H1 (cell line): ENCODE measurements at regions of chr15 and their contacts with region 1.

Region 1: GRCh38 chr15:65028921-65029735 is at the start of gene MTFMT:
- DNase-seq: peak in 1 of 2 experiments; percentile 98
- H3K4me3 ChIP-seq: peak within 1 kb of the TSS; percentile 75 to 93 (median 88)
- H3K27ac ChIP-seq: no peak within 1 kb of the TSS; the same call in 1 of the 2 replicates
- H3K4me1 ChIP-seq: peaks cover 0 to 2% (median 0%) of the 10 kb centered on the region in 4 experiments; a peak in 1 of 7 replicates
- H3K27me3 ChIP-seq: no peaks in the 10 kb centered on the region
- CTCF ChIP-seq: no peak; a peak in 1 of 4 replicates
- EP300 ChIP-seq: no peak
- POLR2A ChIP-seq: peak; percentile 89 to 90
- RAD21 ChIP-seq: no peak; a peak in 1 of 4 replicates
- total RNA-seq, gene MTFMT: 16.5 and 20.8 TPM in 2 replicates

Region 2: GRCh38 chr15:64895285-64896065 is 133.7 kb before region 1 on chr15:
- CTCF ChIA-PET with region 1: no interaction called
- POLR2A ChIA-PET with region 1: no interaction called
- DNase-seq: no peak
- H3K4me3 ChIP-seq: peak overlapping the region in 1 of 4 experiments; percentile 62; a peak in 2 of 8 replicates
- H3K27ac ChIP-seq: no peak overlapping the region
- H3K4me1 ChIP-seq: peaks cover 7 to 26% (median 14%) of the 10 kb centered on the region in 4 experiments; a peak in 6 of 7 replicates
- H3K27me3 ChIP-seq: no peaks in the 10 kb centered on the region
- CTCF ChIP-seq: no peak
- EP300 ChIP-seq: no peak
- POLR2A ChIP-seq: no peak
- RAD21 ChIP-seq: no peak

Region 3: GRCh38 chr15:64930778-64931371 is 98.3 kb before region 1 on chr15:
- CTCF ChIA-PET with region 1: no interaction called
- POLR2A ChIA-PET with region 1: no interaction called
- DNase-seq: peak in 1 of 2 experiments; percentile 39
- H3K4me3 ChIP-seq: no peak overlapping the region
- H3K27ac ChIP-seq: no peak overlapping the region
- H3K4me1 ChIP-seq: no peaks in the 10 kb centered on the region
- H3K27me3 ChIP-seq: no peaks in the 10 kb centered on the region
- CTCF ChIP-seq: no peak
- EP300 ChIP-seq: no peak
- POLR2A ChIP-seq: no peak
- RAD21 ChIP-seq: no peak

Region 4: GRCh38 chr15:65049418-65049840 is 20.3 kb after region 1 on chr15:
- CTCF ChIA-PET with region 1: interaction called, 57 read pairs
- POLR2A ChIA-PET with region 1: no interaction called
- DNase-seq: peak; percentile 61 to 88
- H3K4me3 ChIP-seq: peak overlapping the region in 2 of 4 experiments; percentile 15 to 44; a peak in 4 of 8 replicates
- H3K27ac ChIP-seq: no peak overlapping the region
- H3K4me1 ChIP-seq: no peaks in the 10 kb centered on the region; a peak in 1 of 7 replicates
- H3K27me3 ChIP-seq: no peaks in the 10 kb centered on the region; a peak in 2 of 7 replicates
- CTCF ChIP-seq: no peak
- EP300 ChIP-seq: no peak
- POLR2A ChIP-seq: no peak
- RAD21 ChIP-seq: no peak

Region 5: DNA sequence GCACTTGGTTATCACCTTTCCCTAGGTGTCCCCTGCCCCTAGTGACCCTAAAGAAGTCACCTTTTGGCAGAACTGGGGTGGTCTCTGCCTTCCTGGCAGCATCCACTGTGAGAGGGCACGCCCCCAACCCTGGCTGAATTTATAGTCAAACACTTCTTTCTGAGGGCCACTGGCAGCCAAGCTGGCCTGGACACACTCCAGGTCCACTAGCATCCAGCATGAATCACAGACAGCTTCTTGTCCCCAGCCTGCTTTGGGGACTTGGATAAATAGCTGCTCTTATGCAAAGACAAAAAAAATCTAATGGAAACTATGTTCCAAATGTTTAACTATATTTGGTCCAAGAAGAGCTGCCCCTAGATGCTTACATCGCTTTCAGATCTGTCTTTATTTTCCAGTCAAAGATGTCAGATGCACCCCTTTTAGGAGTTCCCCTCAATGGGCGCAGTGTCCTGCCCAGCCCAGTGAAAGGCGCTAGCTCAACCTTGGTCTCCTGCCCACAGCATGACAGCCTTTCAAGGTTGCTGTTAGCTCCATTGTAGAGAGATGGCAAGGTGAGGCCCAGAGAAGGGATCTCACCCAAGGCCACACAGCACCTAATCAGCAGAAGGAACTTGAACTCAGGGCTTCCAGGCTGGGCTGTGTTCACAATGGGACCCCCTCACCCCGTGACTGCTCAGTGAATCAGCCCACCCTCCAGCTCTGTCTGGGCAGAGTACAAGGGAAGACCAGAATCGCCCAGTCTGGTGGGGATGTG is 31.7 kb after region 1 on chr15:
- CTCF ChIA-PET with region 1: interaction called, 57 read pairs
- POLR2A ChIA-PET with region 1: no interaction called
- DNase-seq: no peak
- H3K4me3 ChIP-seq: no peak overlapping the region
- H3K27ac ChIP-seq: no peak overlapping the region
- H3K4me1 ChIP-seq: no peaks in the 10 kb centered on the region
- H3K27me3 ChIP-seq: no peaks in the 10 kb centered on the region; a peak in 1 of 7 replicates
- CTCF ChIP-seq: peak; percentile 8 to 34 (median 20); a peak in 2 of 4 replicates
- EP300 ChIP-seq: no peak
- POLR2A ChIP-seq: no peak
- RAD21 ChIP-seq: peak in 1 of 2 experiments; percentile 8; a peak in 1 of 4 replicates

Region 6: GRCh38 chr15:65077981-65078352 is 48.8 kb after region 1 on chr15:
- CTCF ChIA-PET with region 1: interaction called, 43 read pairs
- POLR2A ChIA-PET with region 1: no interaction called
- DNase-seq: peak; percentile 84 to 85
- H3K4me3 ChIP-seq: no peak overlapping the region
- H3K27ac ChIP-seq: no peak overlapping the region
- H3K4me1 ChIP-seq: peaks cover 3 to 13% (median 7%) of the 10 kb centered on the region in 4 experiments; a peak in 5 of 7 replicates
- H3K27me3 ChIP-seq: peaks cover 0 to 9% (median 8%) of the 10 kb centered on the region in 4 experiments; a peak in 5 of 7 replicates
- CTCF ChIP-seq: peak; percentile 77 to 95 (median 86)
- EP300 ChIP-seq: no peak
- POLR2A ChIP-seq: no peak
- RAD21 ChIP-seq: peak; percentile 69 to 74

Region 7: GRCh38 chr15:65094294-65094995 is 65.3 kb after region 1 on chr15:
- CTCF ChIA-PET with region 1: interaction called, 12 read pairs
- POLR2A ChIA-PET with region 1: interaction called, 3 read pairs
- DNase-seq: no peak
- H3K4me3 ChIP-seq: no peak overlapping the region
- H3K27ac ChIP-seq: no peak overlapping the region; the same call in 1 of the 2 replicates
- H3K4me1 ChIP-seq: peaks cover 0 to 3% (median under 1%) of the 10 kb centered on the region in 4 experiments; a peak in 2 of 7 replicates
- H3K27me3 ChIP-seq: no peaks in the 10 kb centered on the region
- CTCF ChIP-seq: no peak
- EP300 ChIP-seq: no peak
- POLR2A ChIP-seq: no peak
- RAD21 ChIP-seq: no peak